ENCODE measurements at regions of chr21 and their contacts with region 1.

Region 1: DNA sequence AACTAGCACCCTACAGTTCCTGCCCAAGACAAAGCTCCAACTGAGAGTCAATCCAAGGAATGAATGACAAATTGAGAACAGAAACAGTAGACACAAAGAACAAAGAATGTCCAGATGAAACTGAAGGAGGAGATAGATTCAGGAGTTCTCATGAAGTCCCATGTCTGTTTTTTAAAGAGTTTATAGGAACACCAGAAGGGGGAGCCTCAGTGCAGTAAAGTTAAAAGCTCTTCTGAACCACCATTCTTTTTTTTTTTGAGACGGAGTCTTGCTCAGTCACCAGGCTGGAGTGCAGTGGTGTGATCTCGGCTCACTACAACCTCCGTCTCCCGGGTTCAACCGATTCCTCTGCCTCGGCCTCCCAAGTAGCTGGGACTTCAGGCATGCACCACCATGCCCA is 323.6 kb downstream of the MRPL39 start:
- DNase-seq: peak in 1 of 5 donors; percentile 4
- H3K4me3 ChIP-seq: no peak overlapping the region
- H3K4me3 Mint-ChIP-seq: no peak overlapping the region
- H3K27ac ChIP-seq: no peak overlapping the region
- H3K27ac Mint-ChIP-seq: no peak overlapping the region
- H3K4me1 ChIP-seq: no peaks in the 10 kb centered on the region
- H3K4me1 Mint-ChIP-seq: no peaks in the 10 kb centered on the region
- H3K27me3 ChIP-seq: no peaks in the 10 kb centered on the region
- H3K27me3 Mint-ChIP-seq: peaks cover 0 to 3% of the 10 kb centered on the region in 2 donors

Region 2: GRCh38 chr21:25329227-25329825 is 45.6 kb after region 1 on chr21:
- CTCF ChIA-PET with region 1: no interaction called
- POLR2A ChIA-PET with region 1: no interaction called
- intact Hi-C with region 1: no loop called
- DNase-seq: no peak
- H3K4me3 ChIP-seq: no peak overlapping the region
- H3K4me3 Mint-ChIP-seq: no peak overlapping the region
- H3K27ac ChIP-seq: no peak overlapping the region
- H3K27ac Mint-ChIP-seq: no peak overlapping the region
- H3K4me1 ChIP-seq: no peaks in the 10 kb centered on the region
- H3K4me1 Mint-ChIP-seq: no peaks in the 10 kb centered on the region
- H3K27me3 ChIP-seq: no peaks in the 10 kb centered on the region
- H3K27me3 Mint-ChIP-seq: peaks cover 0 to 2% of the 10 kb centered on the region in 2 donors

Region 3: GRCh38 chr21:25385911-25386474 is 102.3 kb after region 1 on chr21:
- CTCF ChIA-PET with region 1: interaction called, 6 read pairs
- POLR2A ChIA-PET with region 1: no interaction called
- intact Hi-C with region 1: loop called (anchors 1 kb)
- DNase-seq: peak in 4 of 5 donors; percentile 23 to 35 (median 30)
- H3K4me3 ChIP-seq: no peak overlapping the region
- H3K4me3 Mint-ChIP-seq: no peak overlapping the region
- H3K27ac ChIP-seq: no peak overlapping the region
- H3K27ac Mint-ChIP-seq: no peak overlapping the region
- H3K4me1 ChIP-seq: no peaks in the 10 kb centered on the region
- H3K4me1 Mint-ChIP-seq: peaks cover 0 to 3% (median 0%) of the 10 kb centered on the region in 4 donors
- H3K27me3 ChIP-seq: no peaks in the 10 kb centered on the region
- H3K27me3 Mint-ChIP-seq: peaks cover 0 to 3% of the 10 kb centered on the region in 2 donors